ENCODE measurements at regions of chr4 and their contacts with region 1.

Region 1: GRCh38 chr4:138953961-138954371 is 61.6 kb upstream of the NOCT start:
- DNase-seq: peak in 1 of 2 donors; percentile 59
- ATAC-seq: peak; percentile 77
- H3K4me3 ChIP-seq: no peak overlapping the region
- H3K27ac ChIP-seq: no peak overlapping the region
- H3K4me1 ChIP-seq: no peaks in the 10 kb centered on the region
- H3K27me3 ChIP-seq: no peaks in the 10 kb centered on the region

Region 2: DNA sequence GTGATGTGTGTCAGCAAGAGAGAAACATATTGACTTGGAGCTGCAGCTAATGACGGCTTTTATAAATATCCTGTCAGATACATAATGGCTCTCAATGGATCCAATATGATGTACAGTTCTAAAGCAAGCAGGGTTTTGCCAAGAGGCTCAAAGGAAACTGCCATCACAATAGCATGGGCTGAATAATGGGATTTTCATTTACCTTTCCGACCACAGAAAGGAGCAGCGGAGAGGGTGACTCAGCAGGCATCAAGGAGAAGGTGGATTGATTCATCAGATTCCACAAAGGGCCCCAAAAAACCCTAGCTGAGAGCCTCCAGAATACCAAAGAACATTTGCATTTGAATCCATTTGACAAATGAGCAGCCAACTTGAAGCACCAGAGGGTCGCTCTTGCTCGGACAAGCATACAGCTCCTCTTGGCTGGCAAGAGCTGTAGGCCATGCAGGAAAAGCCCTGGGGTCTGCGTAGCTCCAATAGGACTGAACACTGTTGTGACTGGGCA is 294.1 kb before region 1 on chr4:
- intact Hi-C with region 1: no loop called
- DNase-seq: no peak
- ATAC-seq: no peak
- H3K4me3 ChIP-seq: no peak overlapping the region
- H3K27ac ChIP-seq: no peak overlapping the region
- H3K4me1 ChIP-seq: no peaks in the 10 kb centered on the region
- H3K27me3 ChIP-seq: no peaks in the 10 kb centered on the region

Region 3: GRCh38 chr4:139015269-139015947 is 61.4 kb after region 1 on chr4 and contains the start of gene NOCT:
- intact Hi-C with region 1: loop called in 1 of 2 experiments (anchors 10 kb)
- DNase-seq: peak; percentile 93 to 96
- ATAC-seq: peak; percentile 96
- H3K4me3 ChIP-seq: peak within 1 kb of the TSS; percentile 58 to 88
- H3K27ac ChIP-seq: peak within 1 kb of the TSS; percentile 29 to 92
- H3K4me1 ChIP-seq: no peaks in the 10 kb centered on the region
- H3K27me3 ChIP-seq: no peaks in the 10 kb centered on the region
- total RNA-seq, gene NOCT: 5.1 to 6.9 TPM